ENCODE measurements at regions of chr3 and their contacts with region 1.

Region 1: GRCh38 chr3:184874709-184875644 is 63.0 kb downstream of the VPS8 start:
- DNase-seq: peak; percentile 47
- H3K4me3 ChIP-seq: no peak overlapping the region
- H3K27ac ChIP-seq: no peak overlapping the region
- H3K4me1 ChIP-seq: no peaks in the 10 kb centered on the region
- H3K27me3 ChIP-seq: no peaks in the 10 kb centered on the region
- CTCF ChIP-seq: peak; percentile 62

Region 2: GRCh38 chr3:184332370-184333090 is 542.4 kb before region 1 on chr3:
- CTCF ChIA-PET with region 1: no interaction called
- POLR2A ChIA-PET with region 1: no interaction called
- intact Hi-C with region 1: no loop called
- DNase-seq: no peak
- H3K4me3 ChIP-seq: no peak overlapping the region
- H3K27ac ChIP-seq: peak overlapping the region; percentile 50
- H3K4me1 ChIP-seq: peaks cover 17% of the 10 kb centered on the region
- H3K27me3 ChIP-seq: no peaks in the 10 kb centered on the region
- CTCF ChIP-seq: no peak

Region 3: DNA sequence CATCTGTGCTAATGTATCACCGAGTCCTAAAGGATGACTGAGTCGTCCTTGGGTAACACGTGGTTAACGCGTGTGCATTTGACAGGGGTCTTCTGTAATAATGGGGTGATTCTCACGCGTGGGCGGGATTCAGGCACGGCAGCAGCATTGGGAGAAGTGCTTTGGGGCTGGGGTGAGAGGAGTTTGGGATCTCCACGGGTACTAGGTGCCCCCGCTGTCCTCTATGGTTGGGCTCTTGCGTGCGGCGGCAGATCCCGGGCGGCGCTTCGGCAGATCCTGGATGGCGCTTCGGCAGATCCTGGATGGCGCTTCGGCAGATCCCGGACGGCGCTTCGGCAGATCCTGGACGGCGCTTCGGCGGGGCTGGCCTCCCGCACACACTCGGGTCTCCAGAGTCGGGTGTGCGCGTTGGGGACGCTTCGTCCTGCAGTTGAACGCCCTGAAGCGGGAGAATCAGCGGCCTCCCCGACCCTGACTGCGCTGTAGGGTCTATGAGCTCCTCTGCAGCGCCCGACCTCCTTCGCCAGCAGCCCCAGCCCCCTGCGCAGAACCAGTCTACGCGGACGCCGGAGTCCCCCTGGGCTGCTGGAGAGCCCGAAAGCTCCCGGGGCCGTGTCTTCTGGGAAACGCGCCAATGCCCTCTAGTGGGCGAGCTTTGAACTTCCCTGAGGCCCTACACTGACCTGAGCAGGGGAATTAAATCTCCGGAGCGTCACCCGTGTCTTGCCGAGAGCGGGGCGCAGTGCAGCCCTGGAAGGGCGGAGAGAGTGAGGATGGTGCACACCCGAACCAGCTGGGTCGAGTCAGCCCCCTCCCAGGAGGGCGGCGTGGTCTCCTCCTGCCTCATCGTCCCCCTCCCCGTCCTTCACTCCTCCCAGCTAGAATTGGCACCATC is 361.5 kb before region 1 on chr3:
- CTCF ChIA-PET with region 1: no interaction called
- POLR2A ChIA-PET with region 1: no interaction called
- intact Hi-C with region 1: no loop called
- DNase-seq: peak; percentile 89
- H3K4me3 ChIP-seq: peak overlapping the region; percentile 42
- H3K27ac ChIP-seq: no peak overlapping the region
- H3K4me1 ChIP-seq: no peaks in the 10 kb centered on the region
- H3K27me3 ChIP-seq: peaks cover 88% of the 10 kb centered on the region
- CTCF ChIP-seq: peak; percentile 83

Region 4: DNA sequence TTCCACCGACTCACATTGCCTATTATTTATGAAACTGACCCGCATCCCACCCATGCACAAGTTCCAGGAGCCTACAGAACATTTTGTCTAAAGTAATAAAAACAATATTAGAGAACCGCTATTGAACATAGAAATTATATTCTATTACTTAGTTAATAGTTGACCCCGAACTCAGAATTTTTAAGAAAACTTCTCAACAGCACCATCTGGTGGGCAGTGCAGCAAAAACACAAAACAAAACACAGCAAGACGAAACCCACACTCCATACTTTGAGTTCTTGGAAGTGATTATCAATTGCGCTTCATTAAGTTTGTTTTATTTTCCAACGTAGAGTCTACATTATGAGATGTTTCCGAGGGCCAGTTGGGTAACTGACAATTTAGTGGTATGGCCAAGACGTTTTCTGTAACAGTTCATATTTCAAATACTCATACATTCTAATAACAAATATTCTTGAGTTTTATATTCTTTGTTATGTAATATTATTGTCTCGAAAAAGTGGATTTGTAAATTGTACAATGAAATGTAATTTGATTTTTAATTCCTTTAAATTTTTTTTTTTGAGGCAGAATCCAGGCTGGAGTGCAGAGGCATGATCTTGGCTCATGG is 301.9 kb after region 1 on chr3:
- CTCF ChIA-PET with region 1: interaction called, 8 read pairs
- POLR2A ChIA-PET with region 1: no interaction called
- intact Hi-C with region 1: loop called (anchors 2 kb)
- DNase-seq: peak; percentile 63
- H3K4me3 ChIP-seq: no peak overlapping the region
- H3K27ac ChIP-seq: no peak overlapping the region
- H3K4me1 ChIP-seq: no peaks in the 10 kb centered on the region
- H3K27me3 ChIP-seq: no peaks in the 10 kb centered on the region
- CTCF ChIP-seq: peak; percentile 87

Region 5: GRCh38 chr3:185270262-185270955 is 395.4 kb after region 1 on chr3:
- CTCF ChIA-PET with region 1: no interaction called
- POLR2A ChIA-PET with region 1: no interaction called
- intact Hi-C with region 1: loop called (anchors 10 kb)
- DNase-seq: peak; percentile 57
- H3K4me3 ChIP-seq: no peak overlapping the region
- H3K27ac ChIP-seq: no peak overlapping the region
- H3K4me1 ChIP-seq: no peaks in the 10 kb centered on the region
- H3K27me3 ChIP-seq: peaks cover 16% of the 10 kb centered on the region
- CTCF ChIP-seq: peak; percentile 70

Region 6: DNA sequence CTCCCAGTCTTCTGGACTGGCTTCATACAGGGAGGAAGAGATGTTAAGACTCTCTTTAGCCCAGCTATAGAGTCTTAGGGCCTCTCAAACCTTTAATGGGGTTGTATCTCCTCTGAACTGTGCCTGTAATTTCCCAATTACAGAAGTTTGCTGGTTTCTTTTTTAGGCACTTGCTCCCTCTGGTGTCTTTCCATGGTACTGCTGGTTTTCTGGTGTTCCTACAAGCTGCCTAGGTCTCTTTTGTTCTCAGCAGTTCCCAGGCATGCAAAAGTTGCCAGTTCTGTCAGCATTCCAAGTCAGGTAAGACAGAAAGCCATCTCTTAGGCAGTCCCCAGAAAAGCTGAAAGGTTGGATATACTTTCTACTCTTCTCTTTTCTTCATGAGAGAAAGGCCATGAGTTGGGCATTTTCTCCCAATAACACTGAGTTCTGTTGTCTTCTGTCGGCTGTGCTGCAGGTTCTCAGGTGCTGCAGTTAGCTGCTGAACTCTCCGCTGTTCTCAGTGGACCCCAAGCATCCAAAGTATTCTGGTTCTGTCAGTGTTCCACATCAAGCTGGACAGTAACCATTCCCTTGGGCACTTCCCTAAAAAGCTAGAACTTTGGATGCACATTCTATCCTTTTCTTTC is 433.3 kb after region 1 on chr3:
- CTCF ChIA-PET with region 1: no interaction called
- POLR2A ChIA-PET with region 1: no interaction called
- intact Hi-C with region 1: loop called (anchors 10 kb)
- DNase-seq: peak; percentile 84
- H3K4me3 ChIP-seq: no peak overlapping the region
- H3K27ac ChIP-seq: no peak overlapping the region
- H3K4me1 ChIP-seq: no peaks in the 10 kb centered on the region
- H3K27me3 ChIP-seq: no peaks in the 10 kb centered on the region
- CTCF ChIP-seq: peak; percentile 72

Measured in A673 (cell line).